Calu3 (cell line): ENCODE measurements at regions of chr14 and their contacts with region 1.

Region 1: GRCh38 chr14:99575043-99576023 is 28.7 kb downstream of the CCDC85C start:
- DNase-seq: peak; percentile 82
- H3K4me3 Mint-ChIP-seq: peak overlapping the region; percentile 55
- H3K27ac Mint-ChIP-seq: peak overlapping the region; percentile 60
- H3K4me1 Mint-ChIP-seq: peaks cover 69% of the 10 kb centered on the region
- H3K27me3 Mint-ChIP-seq: no peaks in the 10 kb centered on the region
- CTCF ChIP-seq: no peak

Region 2: GRCh38 chr14:99604283-99604765 is 29.0 kb after region 1 on chr14:
- CTCF ChIA-PET with region 1: interaction called, 8 read pairs
- intact Hi-C with region 1: loop called (anchors 2 kb)
- DNase-seq: peak; percentile 98
- H3K4me3 Mint-ChIP-seq: peak overlapping the region; percentile 89
- H3K27ac Mint-ChIP-seq: peak overlapping the region; percentile 14
- H3K4me1 Mint-ChIP-seq: peaks cover 23% of the 10 kb centered on the region
- H3K27me3 Mint-ChIP-seq: no peaks in the 10 kb centered on the region
- CTCF ChIP-seq: no peak

Region 3: DNA sequence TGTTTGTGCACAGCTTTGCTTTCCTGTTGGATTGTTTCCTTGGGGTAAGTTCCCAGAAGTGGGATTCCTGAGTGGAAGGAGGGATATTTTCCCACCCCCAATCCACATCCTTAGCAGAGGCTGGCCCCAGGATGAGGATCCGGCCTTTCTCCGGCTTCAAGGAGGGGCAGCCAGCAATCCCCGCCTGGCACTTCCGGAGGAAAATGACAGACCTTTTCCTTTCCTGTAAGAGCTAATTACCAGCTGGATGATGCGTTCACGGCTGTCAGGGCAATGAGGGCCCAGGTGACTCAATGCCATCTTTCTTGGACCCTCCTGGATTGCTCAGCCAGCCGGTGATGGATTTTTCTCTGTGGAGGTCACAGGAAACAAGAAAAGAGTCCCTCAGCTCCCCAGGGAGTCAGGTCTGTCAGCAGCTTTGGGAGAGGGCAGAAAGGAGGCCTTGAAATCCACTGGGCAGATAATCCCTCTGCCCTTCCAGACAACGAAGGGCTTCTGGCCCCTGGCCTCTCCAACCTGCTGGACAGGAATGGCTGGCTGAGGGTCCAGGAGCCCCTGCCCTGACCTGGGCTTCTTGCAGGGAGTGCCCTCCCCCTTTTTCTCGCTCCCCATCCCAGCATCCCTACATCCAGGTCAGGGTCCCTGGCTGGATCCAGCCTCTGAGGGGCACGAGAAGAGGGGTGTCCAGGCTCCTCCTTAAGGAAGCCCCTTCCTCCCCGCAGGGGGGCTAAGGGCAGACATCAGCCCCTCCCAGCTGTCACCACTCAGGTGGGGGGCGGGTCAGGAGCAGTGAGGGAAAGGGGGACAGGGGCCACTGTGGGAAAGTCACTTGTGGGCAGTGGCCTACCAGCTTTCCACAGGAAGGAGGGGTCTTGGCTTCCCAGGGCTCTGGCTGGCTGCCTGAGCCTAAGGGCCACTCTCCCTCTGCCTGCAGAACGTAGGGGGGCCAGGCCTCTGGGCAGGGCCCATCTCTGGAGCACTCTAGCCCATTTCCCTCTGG is 44.8 kb after region 1 on chr14:
- CTCF ChIA-PET with region 1: no interaction called
- intact Hi-C with region 1: no loop called
- DNase-seq: no peak
- H3K4me3 Mint-ChIP-seq: no peak overlapping the region
- H3K27ac Mint-ChIP-seq: no peak overlapping the region
- H3K4me1 Mint-ChIP-seq: peaks cover 20% of the 10 kb centered on the region
- H3K27me3 Mint-ChIP-seq: peaks cover 13% of the 10 kb centered on the region
- CTCF ChIP-seq: no peak